WTC11 (cell line): ENCODE measurements at regions of chr14 and their contacts with region 1.

Region 1: DNA sequence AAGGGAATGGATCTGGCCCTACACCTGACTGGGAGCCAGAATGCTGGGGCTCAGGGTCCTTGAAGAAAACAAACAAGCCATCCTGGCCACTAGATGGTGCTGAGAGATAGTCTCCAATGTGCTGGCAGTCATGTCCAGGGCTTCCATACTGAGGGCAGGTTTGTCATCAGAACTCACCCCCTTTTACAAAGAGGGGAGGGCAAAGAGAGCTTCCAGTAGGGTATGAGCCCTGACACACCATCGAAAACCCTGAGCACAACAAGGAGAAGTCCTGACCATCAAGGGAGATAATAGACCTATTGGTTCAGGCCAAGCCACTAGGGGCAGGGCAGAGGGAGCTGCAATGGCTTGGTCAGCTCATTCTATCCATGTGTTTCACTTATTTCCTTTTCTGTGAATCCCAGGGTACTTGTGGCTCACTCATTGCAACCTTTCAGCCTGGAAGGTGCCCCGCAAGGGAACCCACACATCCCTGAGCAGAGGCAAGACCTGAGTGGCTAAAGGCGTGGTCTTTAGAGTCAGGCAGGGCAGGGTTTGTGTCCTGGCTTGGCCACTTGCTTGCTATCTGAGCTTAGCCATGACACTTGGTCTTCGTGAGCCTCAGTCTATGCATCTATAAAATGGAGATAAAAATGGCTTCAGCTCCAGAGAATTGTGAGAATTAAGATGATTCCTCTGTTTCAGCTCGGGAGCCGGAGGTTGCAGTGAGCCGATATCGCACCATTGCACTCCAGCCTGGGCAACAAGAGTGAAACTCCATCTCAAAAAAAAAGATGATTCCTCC is 6.2 kb upstream of the PLEKHH1 start:
- DNase-seq: peak; percentile 62
- ATAC-seq: peak; percentile 94
- H3K4me3 Mint-ChIP-seq: no peak overlapping the region
- H3K27ac Mint-ChIP-seq: peak overlapping the region; percentile 64; the same call in 1 of the 2 replicates
- H3K4me1 Mint-ChIP-seq: peaks cover 17% of the 10 kb centered on the region
- H3K27me3 Mint-ChIP-seq: peaks cover 2% of the 10 kb centered on the region
- CTCF ChIP-seq: peak; percentile 18; the same call in 1 of the 2 replicates

Region 2: GRCh38 chr14:67352055-67352454 is 174.8 kb before region 1 on chr14:
- CTCF ChIA-PET with region 1: no interaction called
- POLR2A ChIA-PET with region 1: no interaction called
- DNase-seq: no peak
- ATAC-seq: no peak
- H3K4me3 Mint-ChIP-seq: no peak overlapping the region
- H3K27ac Mint-ChIP-seq: no peak overlapping the region
- H3K4me1 Mint-ChIP-seq: no peaks in the 10 kb centered on the region
- H3K27me3 Mint-ChIP-seq: no peaks in the 10 kb centered on the region
- CTCF ChIP-seq: no peak

Region 3: DNA sequence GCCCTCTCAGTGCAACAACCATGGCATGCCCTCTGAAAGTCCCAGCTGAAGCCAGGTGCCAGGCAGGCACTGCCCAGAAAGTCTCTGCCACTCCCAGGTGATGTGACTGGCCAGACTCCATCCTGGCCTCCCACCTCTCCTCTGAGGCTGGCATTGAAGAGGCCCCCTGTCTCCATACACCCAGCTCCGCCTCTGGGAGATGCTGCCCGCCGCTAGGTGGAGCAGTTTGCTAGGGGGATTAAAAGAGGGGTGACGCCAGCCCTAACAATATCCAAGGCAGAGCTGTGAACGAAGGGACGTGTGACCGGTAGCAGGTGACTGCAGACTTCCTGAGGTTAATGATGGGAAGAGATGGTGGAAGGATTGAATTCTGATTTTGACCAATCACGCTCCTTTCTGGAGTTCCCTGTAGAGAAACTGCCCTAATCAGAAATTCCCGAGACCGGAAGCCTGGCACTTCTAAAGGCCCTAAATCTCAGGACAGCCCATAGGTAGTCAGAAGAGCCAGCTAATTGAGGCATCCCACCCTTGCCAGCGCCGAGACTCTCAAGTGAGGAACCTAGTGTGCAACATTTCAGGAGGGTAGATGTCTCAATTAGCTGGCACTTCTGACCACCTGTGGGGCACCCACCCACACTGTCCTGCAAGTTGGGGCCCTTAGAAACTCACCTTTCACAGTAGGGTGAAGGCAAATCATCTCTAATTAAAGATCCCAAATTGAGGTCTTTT is 106.6 kb before region 1 on chr14:
- CTCF ChIA-PET with region 1: interaction called, 89 read pairs
- POLR2A ChIA-PET with region 1: no interaction called
- DNase-seq: peak; percentile 85
- ATAC-seq: peak; percentile 93
- H3K4me3 Mint-ChIP-seq: no peak overlapping the region
- H3K27ac Mint-ChIP-seq: no peak overlapping the region
- H3K4me1 Mint-ChIP-seq: no peaks in the 10 kb centered on the region
- H3K27me3 Mint-ChIP-seq: no peaks in the 10 kb centered on the region; the same call in 1 of the 2 replicates
- CTCF ChIP-seq: peak; percentile 62; the same call in 1 of the 2 replicates

Region 4: DNA sequence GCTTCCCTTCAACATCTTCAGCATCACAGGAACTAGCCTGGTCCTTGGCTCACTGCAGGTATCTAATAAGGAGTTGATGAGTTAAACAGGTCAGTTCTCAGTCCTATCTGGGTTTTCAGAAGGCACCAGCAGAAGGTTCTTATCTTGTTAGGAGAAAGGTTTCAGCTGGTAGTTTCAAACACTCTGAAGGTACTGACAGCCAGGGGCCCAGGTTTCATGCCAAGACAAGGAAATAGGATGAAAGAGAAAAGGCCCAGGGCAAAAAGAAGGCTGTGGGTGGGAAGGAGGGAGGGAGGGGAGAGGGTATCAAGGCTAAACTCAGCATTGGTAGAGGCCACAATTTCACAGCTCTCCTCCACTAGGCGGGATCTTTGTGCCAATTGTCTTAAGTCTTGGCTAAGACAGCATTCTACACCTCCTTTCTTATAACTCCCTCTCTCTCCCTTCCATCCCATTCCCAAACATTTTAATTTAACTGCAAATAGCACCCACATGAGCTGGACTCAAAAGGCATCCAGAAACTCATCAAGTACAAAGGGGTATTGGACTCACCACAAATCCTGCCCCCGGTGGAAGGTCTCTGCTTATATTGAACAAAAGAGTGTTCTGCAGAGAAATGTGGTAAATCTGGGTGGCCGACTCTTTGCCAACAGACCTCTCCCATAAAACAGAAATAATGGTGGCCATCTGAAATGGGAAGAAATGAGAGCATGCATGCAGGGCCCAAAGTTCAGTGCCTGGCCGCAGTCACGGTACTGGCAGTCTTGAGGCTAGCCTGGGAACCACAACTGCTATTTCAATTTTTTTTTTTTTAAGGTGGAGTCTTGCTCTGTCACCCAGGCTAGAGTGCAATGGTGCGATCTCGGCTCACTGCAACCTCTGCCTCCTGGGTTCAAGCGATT is 59.4 kb before region 1 on chr14:
- CTCF ChIA-PET with region 1: interaction called, 29 read pairs
- POLR2A ChIA-PET with region 1: no interaction called
- DNase-seq: no peak
- ATAC-seq: peak; percentile 44; the same call in 1 of the 2 replicates
- H3K4me3 Mint-ChIP-seq: no peak overlapping the region
- H3K27ac Mint-ChIP-seq: no peak overlapping the region
- H3K4me1 Mint-ChIP-seq: no peaks in the 10 kb centered on the region
- H3K27me3 Mint-ChIP-seq: no peaks in the 10 kb centered on the region; the same call in 1 of the 2 replicates
- CTCF ChIP-seq: no peak

Region 5: GRCh38 chr14:67514650-67515385 is 12.1 kb before region 1 on chr14:
- CTCF ChIA-PET with region 1: interaction called, 83 read pairs
- POLR2A ChIA-PET with region 1: no interaction called
- DNase-seq: peak; percentile 32
- ATAC-seq: peak; percentile 57
- H3K4me3 Mint-ChIP-seq: peak overlapping the region; percentile 80
- H3K27ac Mint-ChIP-seq: no peak overlapping the region
- H3K4me1 Mint-ChIP-seq: peaks cover 21% of the 10 kb centered on the region
- H3K27me3 Mint-ChIP-seq: peaks cover 77% of the 10 kb centered on the region
- CTCF ChIP-seq: no peak

Region 6: GRCh38 chr14:67564236-67564635 is 37.4 kb after region 1 on chr14:
- CTCF ChIA-PET with region 1: interaction called, 173 read pairs
- POLR2A ChIA-PET with region 1: no interaction called
- DNase-seq: no peak
- ATAC-seq: no peak
- H3K4me3 Mint-ChIP-seq: no peak overlapping the region
- H3K27ac Mint-ChIP-seq: peak overlapping the region; percentile 86
- H3K4me1 Mint-ChIP-seq: peaks cover 21% of the 10 kb centered on the region
- H3K27me3 Mint-ChIP-seq: no peaks in the 10 kb centered on the region
- CTCF ChIP-seq: no peak

Region 7: GRCh38 chr14:67619446-67620216 is 92.8 kb after region 1 on chr14 and contains the start of gene ARG2:
- CTCF ChIA-PET with region 1: interaction called, 31 read pairs
- POLR2A ChIA-PET with region 1: no interaction called
- DNase-seq: peak; percentile 100
- ATAC-seq: peak; percentile 91
- H3K4me3 Mint-ChIP-seq: peak within 1 kb of the TSS; percentile 92
- H3K27ac Mint-ChIP-seq: peak within 1 kb of the TSS; percentile 92
- H3K4me1 Mint-ChIP-seq: peaks cover 35% of the 10 kb centered on the region
- H3K27me3 Mint-ChIP-seq: peaks cover 46% of the 10 kb centered on the region
- CTCF ChIP-seq: no peak
- total RNA-seq, gene ARG2: 29.8 to 38.5 TPM (median 33.0 TPM) in 3 replicates